OCI-LY7 (cell line): ENCODE measurements at regions of chr4 and their contacts with region 1.

Region 1: DNA sequence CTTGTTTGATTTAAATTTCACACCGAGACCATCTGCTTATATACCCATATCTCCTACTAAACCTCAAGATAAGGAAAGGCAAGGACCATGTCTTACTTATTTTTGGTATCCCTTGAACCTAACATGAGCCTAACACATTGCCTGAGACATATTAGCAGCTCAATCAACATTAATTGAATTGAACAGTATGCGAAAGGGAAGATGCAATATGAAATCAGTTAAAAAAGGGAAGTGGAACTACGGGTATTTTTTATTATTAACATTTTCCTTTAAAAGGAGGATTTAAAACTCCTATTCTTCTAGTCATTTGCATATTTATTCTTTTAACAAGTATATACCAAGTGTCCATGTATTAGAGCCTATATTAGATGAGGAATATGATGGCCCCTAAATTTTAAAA is 197.0 kb downstream of the CAMK2D start:
- DNase-seq: peak; percentile 67
- H3K4me3 ChIP-seq: peak overlapping the region; percentile 48
- H3K27ac ChIP-seq: peak overlapping the region; percentile 99
- H3K4me1 ChIP-seq: peaks cover 90% of the 10 kb centered on the region
- CTCF ChIP-seq: no peak

Region 2: GRCh38 chr4:113339430-113339813 is 225.1 kb before region 1 on chr4:
- CTCF ChIA-PET with region 1: no interaction called
- POLR2A ChIA-PET with region 1: no interaction called
- intact Hi-C with region 1: no loop called
- DNase-seq: no peak
- H3K4me3 ChIP-seq: no peak overlapping the region
- H3K27ac ChIP-seq: no peak overlapping the region
- H3K4me1 ChIP-seq: no peaks in the 10 kb centered on the region
- CTCF ChIP-seq: no peak

Region 3: DNA sequence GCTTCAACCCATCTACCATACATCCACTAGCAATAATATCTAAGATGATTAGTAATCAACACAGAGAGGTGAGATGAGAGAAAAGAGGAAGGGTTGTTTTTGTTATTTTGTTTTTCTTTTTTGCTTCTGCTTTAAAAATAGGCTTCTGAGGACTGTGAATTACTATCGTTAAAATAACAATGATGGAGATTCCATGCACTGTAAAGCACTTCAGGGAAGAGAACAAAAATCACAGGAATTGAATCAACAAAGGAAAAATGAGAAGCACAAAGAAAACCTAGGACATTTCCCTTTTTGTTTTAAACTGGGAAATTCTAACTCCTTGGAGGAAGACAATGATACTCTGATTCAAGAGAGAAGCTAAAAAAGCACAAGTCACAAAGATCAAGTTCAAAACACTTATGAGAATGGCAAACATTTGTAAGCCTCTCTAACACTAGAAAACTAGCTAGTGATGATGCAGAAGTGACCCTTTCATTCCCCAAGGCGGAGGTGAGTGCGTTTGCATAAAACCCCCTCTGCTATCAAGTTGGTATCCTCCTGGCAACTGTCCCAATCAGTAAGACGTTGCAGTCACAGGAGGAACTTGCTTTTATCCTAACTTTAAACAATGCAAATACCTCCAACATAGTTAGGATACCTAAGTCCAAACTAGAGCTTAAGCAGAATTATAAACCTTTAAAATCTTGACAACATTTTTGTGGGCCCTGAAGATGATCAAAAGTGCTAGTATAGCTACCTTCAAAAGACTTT is 111.4 kb before region 1 on chr4:
- CTCF ChIA-PET with region 1: no interaction called
- POLR2A ChIA-PET with region 1: no interaction called
- intact Hi-C with region 1: no loop called
- DNase-seq: peak; percentile 44
- H3K4me3 ChIP-seq: no peak overlapping the region
- H3K27ac ChIP-seq: peak overlapping the region; percentile 2
- H3K4me1 ChIP-seq: peaks cover 13% of the 10 kb centered on the region
- CTCF ChIP-seq: no peak

Region 4: GRCh38 chr4:113547487-113548042 is 16.9 kb before region 1 on chr4:
- CTCF ChIA-PET with region 1: interaction called, 8 read pairs
- POLR2A ChIA-PET with region 1: interaction called, 39 read pairs
- intact Hi-C with region 1: no loop called
- DNase-seq: peak; percentile 95
- H3K4me3 ChIP-seq: no peak overlapping the region
- H3K27ac ChIP-seq: peak overlapping the region; percentile 60
- H3K4me1 ChIP-seq: peaks cover 25% of the 10 kb centered on the region
- CTCF ChIP-seq: peak; percentile 97

Region 5: GRCh38 chr4:113584407-113585150 is 20.1 kb after region 1 on chr4:
- CTCF ChIA-PET with region 1: no interaction called
- POLR2A ChIA-PET with region 1: interaction called, 159 read pairs
- intact Hi-C with region 1: no loop called
- DNase-seq: no peak
- H3K4me3 ChIP-seq: no peak overlapping the region
- H3K27ac ChIP-seq: peak overlapping the region; percentile 37
- H3K4me1 ChIP-seq: peaks cover 63% of the 10 kb centered on the region
- CTCF ChIP-seq: no peak

Region 6: DNA sequence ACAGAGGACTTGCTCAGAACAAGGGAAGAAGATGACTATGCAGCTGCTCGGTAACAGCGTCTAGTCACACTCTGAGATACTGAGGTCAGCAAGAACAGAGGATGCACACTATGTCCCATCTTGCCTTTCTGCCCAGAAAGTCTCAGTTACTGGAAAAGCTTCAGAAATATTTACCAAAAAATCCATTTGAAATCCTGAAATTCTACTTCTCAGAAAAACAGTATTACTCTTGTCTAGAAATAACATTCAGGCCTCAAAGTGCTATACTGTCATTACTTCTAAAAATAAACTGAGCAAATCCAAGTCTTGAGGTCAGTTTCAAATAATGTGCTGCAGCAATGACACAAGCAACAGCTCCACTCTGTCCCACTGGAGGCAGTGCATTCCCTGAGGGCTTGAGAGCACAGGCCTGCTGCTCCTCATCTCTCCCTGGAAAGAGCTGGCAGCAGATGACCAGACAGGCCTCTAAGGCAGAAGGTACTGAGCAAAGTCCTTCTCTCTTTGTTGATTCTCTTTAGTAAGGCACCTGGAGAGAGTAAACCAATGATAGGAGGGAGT is 120.1 kb after region 1 on chr4:
- CTCF ChIA-PET with region 1: no interaction called
- POLR2A ChIA-PET with region 1: interaction called, 3 read pairs
- intact Hi-C with region 1: loop called (anchors 1 kb)
- DNase-seq: peak; percentile 34
- H3K4me3 ChIP-seq: no peak overlapping the region
- H3K27ac ChIP-seq: peak overlapping the region; percentile 89
- H3K4me1 ChIP-seq: peaks cover 52% of the 10 kb centered on the region
- CTCF ChIP-seq: peak; percentile 47; the same call in 1 of the 2 replicates

Region 7: DNA sequence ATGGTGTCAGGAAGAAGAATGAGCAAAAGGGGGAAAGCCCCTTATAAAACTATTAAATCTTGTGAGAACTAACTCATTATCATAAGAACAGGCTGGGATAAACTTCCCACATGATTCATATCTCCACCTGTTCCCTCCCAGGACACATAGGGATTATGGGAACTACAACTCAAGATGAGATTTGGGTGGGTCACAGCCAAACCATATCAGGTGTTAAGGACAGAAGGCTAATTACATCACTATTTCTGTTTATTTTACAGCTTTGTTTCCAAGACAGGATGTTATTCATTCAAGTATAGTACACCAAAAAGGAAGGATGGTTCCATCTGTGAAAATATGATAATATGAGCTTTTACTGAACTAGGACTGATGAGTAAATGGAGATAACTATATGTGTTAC is 478.6 kb after region 1 on chr4:
- CTCF ChIA-PET with region 1: no interaction called
- POLR2A ChIA-PET with region 1: no interaction called
- intact Hi-C with region 1: no loop called
- DNase-seq: no peak
- H3K4me3 ChIP-seq: no peak overlapping the region
- H3K27ac ChIP-seq: no peak overlapping the region
- H3K4me1 ChIP-seq: no peaks in the 10 kb centered on the region
- CTCF ChIP-seq: no peak

Region 8: GRCh38 chr4:114603497-114603896 is 1039.0 kb after region 1 on chr4:
- CTCF ChIA-PET with region 1: no interaction called
- POLR2A ChIA-PET with region 1: no interaction called
- intact Hi-C with region 1: loop called (anchors 10 kb)
- DNase-seq: peak; percentile 85
- H3K4me3 ChIP-seq: peak overlapping the region; percentile 93
- H3K27ac ChIP-seq: peak overlapping the region; percentile 80
- H3K4me1 ChIP-seq: peaks cover 58% of the 10 kb centered on the region
- CTCF ChIP-seq: no peak